Common myeloid progenitor, CD34-positive (primary cell): ENCODE measurements at regions of chr18 and their contacts with region 1.

Region 1: DNA sequence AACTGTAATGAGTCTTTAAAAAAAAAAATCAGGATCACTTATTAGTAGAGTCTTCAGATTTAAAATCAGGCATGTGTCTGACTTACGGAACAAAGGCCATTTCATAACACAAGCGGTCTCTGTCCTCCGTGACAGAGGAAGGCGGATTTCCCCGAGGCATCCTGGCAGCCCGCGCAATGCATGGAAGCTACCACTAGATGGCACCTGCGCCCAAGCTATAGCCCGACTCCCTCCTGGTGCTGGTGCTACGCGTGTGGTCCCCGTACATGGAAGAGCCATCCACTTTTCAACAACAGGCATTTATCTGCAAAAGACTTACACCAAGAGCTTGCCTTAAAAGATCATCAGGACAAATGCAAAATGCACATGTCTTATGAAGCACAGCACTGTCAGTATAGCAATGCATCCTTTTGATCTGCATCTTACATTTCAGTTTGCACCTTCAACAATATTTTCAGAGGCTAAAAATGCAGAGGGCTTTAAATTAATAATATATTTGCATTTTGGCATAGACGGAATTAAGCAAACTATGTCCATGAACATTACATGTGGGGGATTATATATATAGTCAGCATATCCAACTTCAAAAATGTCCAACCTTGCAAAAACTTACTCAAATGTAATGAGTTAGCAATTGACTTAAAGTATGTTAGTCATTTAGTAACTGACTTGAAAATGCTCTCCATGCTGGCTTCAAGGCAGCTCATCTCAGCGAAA is 96.0 kb downstream of the ZNF516 start:
- DNase-seq: peak; percentile 68 to 83 (median 79)
- H3K4me3 ChIP-seq: no peak overlapping the region
- H3K27ac ChIP-seq: no peak overlapping the region
- H3K4me1 ChIP-seq: peaks cover 0 to 5% (median 0%) of the 10 kb centered on the region in 4 experiments
- H3K27me3 ChIP-seq: no peaks in the 10 kb centered on the region

Region 2: DNA sequence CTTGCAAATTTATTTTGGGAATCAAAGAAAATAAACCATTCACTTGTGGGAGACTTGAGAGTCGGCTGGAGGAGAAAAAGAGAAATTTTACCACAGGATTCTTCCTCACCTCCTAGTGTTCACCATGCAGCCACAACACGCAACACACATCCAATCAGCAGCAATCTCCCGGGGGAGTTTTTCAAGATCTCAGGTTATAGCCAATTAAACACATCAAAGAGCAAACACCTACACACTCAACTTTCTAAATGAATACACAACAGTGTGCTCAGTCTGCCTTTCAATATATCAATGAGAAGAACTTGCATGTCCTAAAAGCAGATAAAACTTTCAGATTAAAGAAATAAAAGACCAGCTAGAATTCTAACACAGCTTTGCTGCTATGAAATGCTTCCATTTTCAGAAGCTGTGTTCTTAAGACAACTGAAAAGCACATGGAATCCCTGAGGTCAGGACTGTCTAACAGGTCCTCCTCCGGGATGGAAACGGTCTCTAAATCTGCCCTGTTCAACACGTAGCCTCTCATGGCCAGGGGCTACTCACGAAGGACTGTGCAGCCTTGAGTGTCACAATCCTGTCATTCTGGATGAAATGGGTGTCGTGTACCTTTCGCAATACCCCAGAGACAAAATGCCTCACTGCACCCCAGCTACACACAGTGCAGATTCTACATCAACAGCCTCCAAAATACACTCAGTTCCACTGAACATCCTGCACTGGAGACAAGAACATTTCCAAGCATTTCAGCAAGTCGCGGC is 11.8 kb after region 1 on chr18:
- CTCF ChIA-PET with region 1: interaction called, 24 read pairs
- POLR2A ChIA-PET with region 1: no interaction called
- DNase-seq: no peak
- H3K4me3 ChIP-seq: no peak overlapping the region
- H3K27ac ChIP-seq: no peak overlapping the region
- H3K4me1 ChIP-seq: peaks cover 0 to 2% (median 0%) of the 10 kb centered on the region in 4 experiments
- H3K27me3 ChIP-seq: no peaks in the 10 kb centered on the region

Region 3: DNA sequence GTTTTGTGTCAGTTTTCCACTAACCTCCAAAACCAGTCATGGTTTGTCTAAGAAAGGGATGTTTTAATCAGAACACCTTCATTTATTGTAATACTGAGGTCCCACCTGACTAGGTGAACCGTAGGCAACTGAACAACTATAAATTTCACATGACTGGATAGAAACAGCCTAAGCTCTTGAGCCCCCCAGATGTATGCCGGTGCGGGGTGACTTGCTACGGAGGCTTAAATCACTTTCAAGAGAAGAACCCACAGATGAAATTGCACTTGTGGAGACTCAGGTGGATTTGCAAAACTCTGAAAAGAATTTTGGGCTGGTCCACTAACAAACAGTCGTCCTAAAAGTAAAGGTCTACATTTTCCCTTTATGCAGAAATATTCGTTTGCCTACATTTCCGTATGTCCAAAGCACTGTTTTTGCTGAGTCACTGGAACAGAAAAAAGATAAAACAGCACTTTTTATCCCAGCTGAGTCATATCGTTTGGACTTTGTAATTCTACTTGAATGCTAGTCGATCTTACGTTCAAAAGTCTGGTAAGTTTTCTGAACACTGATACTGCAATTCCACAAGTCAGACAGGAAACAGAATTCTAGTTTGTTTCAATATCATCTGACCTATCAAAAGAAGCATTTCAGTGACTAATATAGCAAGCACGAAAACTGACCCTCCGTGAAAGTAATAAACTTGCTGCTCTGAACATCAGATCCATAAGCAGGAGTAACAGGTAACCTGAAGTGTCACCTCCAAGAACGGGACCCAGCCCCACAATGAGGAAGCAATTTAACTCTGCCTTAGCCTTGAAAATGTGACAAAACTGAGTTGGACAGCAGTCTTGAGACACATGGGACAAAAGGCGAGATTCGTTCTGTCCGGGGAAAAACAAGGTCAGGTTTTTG is 77.9 kb after region 1 on chr18:
- CTCF ChIA-PET with region 1: interaction called, 17 read pairs
- POLR2A ChIA-PET with region 1: no interaction called
- DNase-seq: peak; percentile 62 to 82 (median 79)
- H3K4me3 ChIP-seq: peak overlapping the region in 6 of 7 experiments; percentile 35 to 83 (median 56)
- H3K27ac ChIP-seq: peak overlapping the region; percentile 17 to 65
- H3K4me1 ChIP-seq: peaks cover 20 to 61% (median 42%) of the 10 kb centered on the region in 4 experiments
- H3K27me3 ChIP-seq: no peaks in the 10 kb centered on the region

Region 4: DNA sequence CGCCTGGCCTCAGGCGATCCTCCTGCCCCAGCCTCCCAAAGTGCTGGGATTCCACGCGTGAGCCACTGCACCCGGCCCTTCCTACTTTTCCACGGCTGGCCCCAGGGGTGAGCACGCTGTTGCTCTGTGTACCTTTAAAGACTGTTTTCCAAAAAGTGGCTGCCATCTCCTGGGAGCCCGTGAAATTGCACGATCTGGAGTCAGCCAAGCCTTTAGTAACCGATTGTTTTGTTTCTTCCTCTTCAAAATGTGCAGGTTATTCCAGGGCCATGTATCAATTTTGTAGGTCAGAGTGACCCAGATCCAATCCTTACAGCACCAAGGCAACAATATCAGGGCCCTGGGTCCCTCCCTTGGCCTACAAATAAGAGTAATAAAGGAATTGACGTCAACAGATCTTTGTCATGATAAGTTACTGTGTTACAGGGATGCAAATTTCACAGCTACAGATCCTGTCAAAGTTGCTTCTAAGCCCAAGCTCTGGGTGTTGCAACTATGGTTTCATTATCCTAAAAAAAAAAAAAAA is 287.7 kb after region 1 on chr18:
- CTCF ChIA-PET with region 1: interaction called, 77 read pairs
- POLR2A ChIA-PET with region 1: interaction called, 3 read pairs
- DNase-seq: peak; percentile 48 to 73 (median 64)
- H3K4me3 ChIP-seq: no peak overlapping the region
- H3K27ac ChIP-seq: no peak overlapping the region
- H3K4me1 ChIP-seq: peaks cover 0 to 3% (median 0%) of the 10 kb centered on the region in 4 experiments
- H3K27me3 ChIP-seq: peaks cover 0 to 22% (median 12%) of the 10 kb centered on the region in 5 experiments